Activated naive CD4-positive, alpha-beta T cell treated with anti-CD3 and anti-CD28 coated beads for 36 hours (primary cell): ENCODE measurements at regions of chr9 and their contacts with region 1.

Region 1: DNA sequence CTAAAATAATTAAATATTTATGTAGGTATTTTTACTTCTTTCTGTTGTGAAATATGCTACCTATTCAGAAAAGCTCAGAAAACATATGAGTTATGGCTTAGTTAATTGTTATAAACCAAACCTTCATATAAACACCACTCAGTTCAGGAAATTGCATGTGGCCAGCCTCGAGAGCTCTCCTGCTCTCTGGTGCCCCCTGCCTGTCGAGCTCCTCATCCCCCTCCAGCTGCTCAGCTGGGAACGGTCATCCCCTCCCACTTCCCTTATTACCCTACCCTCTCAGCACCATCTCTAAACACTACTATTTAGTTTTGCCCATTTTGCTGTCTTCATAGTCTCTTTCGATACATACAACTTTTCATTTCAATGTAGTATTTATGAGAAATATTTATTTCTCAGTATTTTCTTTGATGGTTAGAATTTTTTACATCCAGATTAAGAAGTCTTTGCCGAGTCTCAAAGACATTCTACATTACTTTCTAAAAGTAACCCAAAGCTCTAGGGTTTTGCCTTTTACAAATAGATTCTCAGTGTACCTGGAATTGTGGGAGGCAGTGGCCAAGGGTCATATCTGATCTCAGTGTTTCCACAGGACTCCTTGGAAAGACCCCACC is 51.2 kb upstream of the SEMA4D start:
- DNase-seq: peak; percentile 94
- H3K4me3 Mint-ChIP-seq: no peak overlapping the region
- H3K27ac Mint-ChIP-seq: peak overlapping the region; percentile 74
- H3K4me1 Mint-ChIP-seq: peaks cover 18% of the 10 kb centered on the region
- H3K27me3 Mint-ChIP-seq: no peaks in the 10 kb centered on the region

Region 2: DNA sequence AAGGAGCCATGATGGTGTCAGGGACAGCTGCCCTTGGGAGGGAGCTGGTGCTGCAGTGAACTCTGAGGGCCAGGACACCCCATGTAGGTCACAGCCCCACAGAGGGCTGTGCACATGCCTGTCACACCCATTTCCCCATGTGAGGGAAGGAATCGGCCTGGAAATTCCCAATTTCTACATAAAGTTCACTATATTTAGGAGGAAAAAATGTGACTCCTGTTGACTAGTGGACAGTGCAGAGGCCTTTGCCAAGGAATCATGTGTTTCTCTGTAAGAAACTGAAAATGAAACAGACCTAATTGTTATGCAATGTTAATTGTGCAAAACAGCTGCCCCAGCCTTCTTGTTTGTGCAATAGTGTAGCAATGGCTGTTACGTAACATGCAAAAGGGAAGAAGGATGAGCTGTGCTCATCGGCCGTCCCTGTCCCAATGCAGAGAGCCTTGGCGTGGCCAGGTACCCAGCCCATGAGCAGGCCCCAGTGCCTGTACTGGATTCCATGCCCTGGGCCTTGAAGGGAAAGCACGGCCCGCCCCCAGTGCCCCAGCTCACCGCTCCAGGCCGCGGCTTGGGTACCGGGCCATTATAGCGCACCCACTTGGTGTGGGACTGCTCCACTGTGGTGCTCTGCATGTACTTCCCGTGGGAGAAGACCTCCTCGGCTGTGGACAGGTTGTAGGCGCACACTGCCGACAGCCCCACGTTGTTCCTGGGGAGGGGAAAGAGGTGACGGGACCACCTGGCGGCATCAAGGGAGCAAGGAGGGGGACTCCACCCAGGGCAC is 160.9 kb before region 1 on chr9:
- CTCF ChIA-PET with region 1: interaction called, 10 read pairs
- intact Hi-C with region 1: no loop called
- DNase-seq: no peak
- H3K4me3 Mint-ChIP-seq: no peak overlapping the region
- H3K27ac Mint-ChIP-seq: no peak overlapping the region
- H3K4me1 Mint-ChIP-seq: peaks cover 9% of the 10 kb centered on the region
- H3K27me3 Mint-ChIP-seq: no peaks in the 10 kb centered on the region

Region 3: DNA sequence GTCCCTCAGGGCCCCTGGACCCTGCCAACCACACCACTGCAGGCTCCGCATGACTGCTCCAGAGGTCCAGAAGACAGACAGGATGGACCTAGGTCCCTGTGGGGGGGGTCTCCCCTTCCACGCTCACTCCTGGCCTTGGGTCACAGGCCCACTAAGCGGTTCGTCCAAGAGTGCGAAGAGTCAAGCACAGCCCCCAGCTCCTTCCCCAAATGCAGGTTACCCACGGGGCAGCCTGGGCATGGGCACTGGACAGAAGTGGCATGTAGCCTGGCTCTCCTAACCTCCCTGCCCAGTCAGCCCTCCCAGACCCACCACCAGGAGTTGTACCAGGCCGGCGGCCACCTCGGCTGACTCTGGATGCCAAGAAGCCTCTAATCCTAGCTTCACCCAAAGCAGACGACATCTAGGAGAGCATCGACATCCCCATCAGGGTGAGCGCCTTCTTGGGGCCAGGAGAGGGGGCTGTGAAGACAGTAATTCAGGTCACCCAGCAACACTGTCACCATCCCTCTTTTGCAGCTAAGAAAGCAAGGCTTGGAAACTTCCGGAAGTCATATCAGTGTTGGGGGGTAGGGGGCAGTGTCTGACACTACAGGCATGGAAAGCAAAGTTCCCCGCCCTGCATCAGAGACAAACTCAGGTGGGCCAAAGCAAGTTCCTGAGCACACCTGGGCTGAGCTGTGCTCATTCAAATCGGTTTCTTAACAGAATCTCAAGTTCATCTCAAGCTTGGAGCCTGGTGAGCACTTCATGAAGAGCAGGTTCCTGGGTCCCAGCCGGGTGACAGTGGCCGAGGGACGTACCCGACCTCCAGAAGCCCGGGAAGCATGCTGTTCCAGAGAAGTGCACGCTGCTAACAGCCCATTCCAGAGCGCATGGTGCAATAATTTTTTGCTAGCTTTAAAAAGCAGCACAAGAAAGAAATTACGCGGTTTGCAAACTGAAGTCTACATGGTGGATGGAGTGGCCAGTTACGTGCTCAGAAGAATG is 119.9 kb before region 1 on chr9:
- CTCF ChIA-PET with region 1: interaction called, 64 read pairs
- intact Hi-C with region 1: loop called (anchors 1 kb)
- DNase-seq: peak; percentile 79
- H3K4me3 Mint-ChIP-seq: no peak overlapping the region
- H3K27ac Mint-ChIP-seq: peak overlapping the region; percentile 98
- H3K4me1 Mint-ChIP-seq: peaks cover 90% of the 10 kb centered on the region
- H3K27me3 Mint-ChIP-seq: no peaks in the 10 kb centered on the region

Region 4: GRCh38 chr9:89461265-89461664 is 87.9 kb before region 1 on chr9:
- CTCF ChIA-PET with region 1: interaction called, 14 read pairs
- intact Hi-C with region 1: no loop called
- DNase-seq: peak; percentile 71
- H3K4me3 Mint-ChIP-seq: no peak overlapping the region
- H3K27ac Mint-ChIP-seq: peak overlapping the region; percentile 50
- H3K4me1 Mint-ChIP-seq: peaks cover 96% of the 10 kb centered on the region
- H3K27me3 Mint-ChIP-seq: no peaks in the 10 kb centered on the region

Region 5: GRCh38 chr9:89483592-89484522 is 65.3 kb before region 1 on chr9:
- CTCF ChIA-PET with region 1: interaction called, 16 read pairs
- intact Hi-C with region 1: loop called (anchors 2 kb)
- DNase-seq: peak; percentile 75
- H3K4me3 Mint-ChIP-seq: peak overlapping the region; percentile 78
- H3K27ac Mint-ChIP-seq: peak overlapping the region; percentile 91
- H3K4me1 Mint-ChIP-seq: peaks cover 87% of the 10 kb centered on the region
- H3K27me3 Mint-ChIP-seq: no peaks in the 10 kb centered on the region

Region 6: GRCh38 chr9:89505911-89506310 is 43.2 kb before region 1 on chr9:
- CTCF ChIA-PET with region 1: interaction called, 10 read pairs
- intact Hi-C with region 1: no loop called
- DNase-seq: no peak
- H3K4me3 Mint-ChIP-seq: no peak overlapping the region
- H3K27ac Mint-ChIP-seq: peak overlapping the region; percentile 24
- H3K4me1 Mint-ChIP-seq: peaks cover 80% of the 10 kb centered on the region
- H3K27me3 Mint-ChIP-seq: no peaks in the 10 kb centered on the region

Region 7: DNA sequence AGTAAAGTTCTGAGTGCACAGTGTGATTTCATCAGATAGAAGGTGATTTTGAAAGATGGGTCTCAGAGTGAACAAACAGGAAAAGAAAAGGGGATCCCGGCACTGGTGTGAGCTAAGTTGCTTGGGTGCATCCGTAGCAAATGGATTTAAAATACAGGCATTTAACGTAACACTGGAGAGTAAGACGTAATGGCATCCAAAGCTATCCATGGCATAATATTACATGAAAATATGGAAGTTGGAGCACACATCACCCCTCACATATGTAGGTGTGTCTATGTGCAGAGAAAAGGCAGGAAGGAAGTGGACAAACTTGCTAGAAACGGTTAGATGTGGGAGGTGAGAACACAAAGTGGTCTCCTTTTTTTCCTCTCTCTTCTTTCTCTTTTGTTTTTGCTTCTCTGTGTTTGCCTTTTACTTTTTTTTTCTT is 13.0 kb before region 1 on chr9:
- CTCF ChIA-PET with region 1: interaction called, 28 read pairs
- intact Hi-C with region 1: loop called (anchors 1 kb)
- DNase-seq: peak; percentile 55
- H3K4me3 Mint-ChIP-seq: peak overlapping the region; percentile 44
- H3K27ac Mint-ChIP-seq: peak overlapping the region; percentile 86
- H3K4me1 Mint-ChIP-seq: peaks cover 88% of the 10 kb centered on the region
- H3K27me3 Mint-ChIP-seq: no peaks in the 10 kb centered on the region